Posterior cingulate gyrus (tissue), 11 donors: ENCODE measurements at regions of chr19 and their contacts with region 1.

Region 1: DNA sequence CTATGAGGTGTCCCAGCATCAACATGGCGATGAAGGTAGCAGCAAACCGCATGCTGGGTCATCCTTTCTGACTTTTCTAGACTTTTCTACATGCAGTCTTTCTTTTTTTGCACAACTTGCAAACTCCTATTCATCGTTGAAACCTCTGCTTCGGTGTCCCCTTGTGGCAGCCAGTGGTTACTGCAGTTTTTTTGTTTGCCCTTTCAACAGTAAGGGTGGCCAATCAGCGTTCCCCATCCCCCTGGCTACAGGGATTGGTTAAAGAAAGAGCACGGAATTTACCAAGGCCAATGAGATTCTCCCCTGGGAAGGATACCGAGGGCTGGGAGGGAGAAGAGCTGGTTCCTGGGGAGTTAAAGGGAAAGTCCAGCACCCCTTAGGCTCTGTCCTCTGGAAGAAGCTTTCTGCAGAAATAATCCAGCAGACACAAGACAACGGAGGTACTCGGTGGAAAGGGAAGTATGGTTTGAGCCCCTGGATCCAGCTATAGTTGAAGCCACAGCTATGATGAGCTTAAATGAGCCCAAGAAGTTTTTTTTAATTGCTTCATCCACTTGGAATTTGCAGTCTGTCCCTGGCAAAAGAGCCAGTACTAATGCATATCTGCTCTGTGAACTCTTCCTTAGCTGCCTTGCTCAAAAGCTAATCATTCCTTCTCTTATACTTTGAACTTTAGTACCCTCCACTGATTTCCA is 5.6 kb upstream of the LSM4 start:
- DNase-seq: peak; percentile 83 to 98 (median 92)

Region 2: GRCh38 chr19:18192673-18193387 is 135.7 kb before region 1 on chr19 and contains the start of gene MPV17L2:
- intact Hi-C with region 1: loop called (anchors 5 kb)
- DNase-seq: peak; percentile 100